ENCODE measurements at regions of chr15 and their contacts with region 1.

Region 1: GRCh38 chr15:74382004-74382816 is 14.8 kb upstream of the CYP11A1 start:
- DNase-seq: peak; percentile 66
- ATAC-seq: peak; percentile 93
- H3K4me3 ChIP-seq: no peak overlapping the region
- H3K27ac ChIP-seq: no peak overlapping the region
- H3K4me1 ChIP-seq: peaks cover 19 to 69% of the 10 kb centered on the region in 2 experiments
- H3K27me3 ChIP-seq: no peaks in the 10 kb centered on the region
- CTCF ChIP-seq: peak in 2 of 3 experiments; percentile 97 to 98; a peak in 4 of 6 replicates
- POLR2A ChIP-seq: no peak
- RAD21 ChIP-seq: no peak

Region 2: DNA sequence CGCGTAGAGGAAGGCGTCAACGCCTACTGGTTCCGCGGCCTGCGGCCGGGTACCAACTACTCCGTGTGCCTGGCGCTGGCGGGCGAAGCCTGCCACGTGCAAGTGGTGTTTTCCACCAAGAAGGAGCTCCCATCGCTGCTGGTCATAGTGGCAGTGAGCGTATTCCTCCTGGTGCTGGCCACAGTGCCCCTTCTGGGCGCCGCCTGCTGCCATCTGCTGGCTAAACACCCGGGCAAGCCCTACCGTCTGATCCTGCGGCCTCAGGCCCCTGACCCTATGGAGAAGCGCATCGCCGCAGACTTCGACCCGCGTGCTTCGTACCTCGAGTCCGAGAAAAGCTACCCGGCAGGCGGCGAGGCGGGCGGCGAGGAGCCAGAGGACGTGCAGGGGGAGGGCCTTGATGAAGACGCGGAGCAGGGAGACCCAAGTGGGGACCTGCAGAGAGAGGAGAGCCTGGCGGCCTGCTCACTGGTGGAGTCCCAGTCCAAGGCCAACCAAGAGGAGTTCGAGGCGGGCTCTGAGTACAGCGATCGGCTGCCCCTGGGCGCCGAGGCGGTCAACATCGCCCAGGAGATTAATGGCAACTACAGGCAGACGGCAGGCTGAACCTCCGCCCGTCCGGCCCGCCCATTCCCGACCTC is 247.7 kb before region 1 on chr15:
- CTCF ChIA-PET with region 1: no interaction called
- POLR2A ChIA-PET with region 1: no interaction called
- RAD21 ChIA-PET with region 1: no interaction called
- intact Hi-C with region 1: no loop called
- DNase-seq: no peak
- ATAC-seq: peak; percentile 69
- H3K4me3 ChIP-seq: no peak overlapping the region
- H3K27ac ChIP-seq: no peak overlapping the region
- H3K4me1 ChIP-seq: no peaks in the 10 kb centered on the region
- H3K27me3 ChIP-seq: no peaks in the 10 kb centered on the region
- CTCF ChIP-seq: peak in 2 of 3 experiments; percentile 25 to 53; a peak in 3 of 6 replicates
- POLR2A ChIP-seq: no peak
- RAD21 ChIP-seq: peak; percentile 26; the same call in 1 of the 2 replicates

Region 3: DNA sequence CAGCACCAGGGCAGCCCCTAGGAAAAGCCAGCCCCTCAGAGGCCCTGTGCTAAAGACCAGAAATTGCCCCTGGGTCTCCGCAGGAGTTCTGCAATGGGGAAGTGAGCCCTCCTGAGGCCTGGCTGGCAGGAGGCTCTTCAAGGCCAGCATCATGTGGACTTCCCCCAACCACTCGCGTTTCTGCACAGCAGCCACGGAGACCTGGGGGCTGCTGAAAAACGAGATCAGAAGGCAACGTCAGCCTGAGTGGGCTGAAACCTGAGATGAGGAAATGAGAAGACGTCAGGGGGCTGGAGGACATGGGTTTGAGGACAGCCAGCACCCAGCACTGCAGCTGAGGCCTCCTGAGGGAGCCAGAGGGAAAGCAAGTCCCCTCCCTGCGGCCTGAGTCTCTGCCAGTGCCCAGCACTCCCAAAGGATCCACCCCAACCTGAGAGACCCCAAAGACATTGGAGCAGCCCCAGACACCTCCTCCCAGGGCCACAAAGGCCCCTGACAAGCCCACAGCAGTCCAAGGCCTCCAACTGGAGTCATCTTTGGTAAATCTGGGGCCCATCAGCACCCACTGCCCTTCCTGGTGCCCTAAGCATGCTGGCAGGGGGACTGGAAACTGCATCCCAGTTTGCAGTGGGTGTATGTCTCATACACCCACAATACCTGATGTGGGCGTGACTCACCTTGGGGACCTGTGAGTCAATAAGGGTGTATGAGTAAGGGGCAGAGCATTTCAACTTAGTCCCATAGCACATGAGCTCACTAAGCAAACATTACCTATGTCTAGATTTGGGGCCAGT is 14.4 kb after region 1 on chr15:
- CTCF ChIA-PET with region 1: interaction called, 4 read pairs
- POLR2A ChIA-PET with region 1: interaction called, 24 read pairs
- RAD21 ChIA-PET with region 1: no interaction called
- intact Hi-C with region 1: no loop called
- DNase-seq: peak; percentile 89
- ATAC-seq: peak; percentile 76
- H3K4me3 ChIP-seq: peak overlapping the region; percentile 16 to 40; a peak in 3 of 4 replicates
- H3K27ac ChIP-seq: peak overlapping the region; percentile 75
- H3K4me1 ChIP-seq: peaks cover 68 to 98% of the 10 kb centered on the region in 2 experiments
- H3K27me3 ChIP-seq: no peaks in the 10 kb centered on the region
- CTCF ChIP-seq: 0 out of 6 replicates have a peak, but pooled peaks of 1 of the 3 experiments have one; percentile 6
- POLR2A ChIP-seq: no peak
- RAD21 ChIP-seq: no peak

Region 4: DNA sequence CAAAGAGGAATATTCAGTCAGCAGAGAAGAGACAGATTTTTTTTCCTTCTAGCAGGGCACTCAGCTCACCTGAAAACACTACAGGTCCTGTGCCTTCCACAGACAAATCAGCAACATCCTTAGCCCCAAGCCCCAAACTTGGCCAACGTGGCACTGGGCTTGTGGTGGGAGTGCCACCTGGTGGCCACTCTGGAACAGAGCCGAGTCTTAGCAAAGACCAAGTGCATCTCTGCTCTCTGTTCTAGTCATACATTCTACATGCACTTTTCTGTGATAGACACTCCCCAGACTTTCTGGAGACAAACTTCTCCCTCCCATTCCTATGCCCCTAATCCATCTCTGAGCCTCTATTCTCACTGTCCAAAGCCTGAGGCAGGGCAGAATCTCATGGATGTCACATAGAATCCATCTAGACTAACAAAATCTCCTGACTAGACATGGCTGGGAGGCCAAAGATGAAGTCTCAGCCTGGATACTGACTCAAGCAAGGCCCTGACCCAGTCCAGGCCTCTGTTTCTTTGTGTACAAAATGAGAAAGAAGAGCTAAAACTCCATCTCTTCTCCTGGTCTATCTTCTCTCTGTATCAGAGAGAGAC is 56.6 kb after region 1 on chr15:
- CTCF ChIA-PET with region 1: interaction called, 83 read pairs
- POLR2A ChIA-PET with region 1: interaction called, 9 read pairs
- RAD21 ChIA-PET with region 1: interaction called, 13 to 15 read pairs
- intact Hi-C with region 1: loop called (anchors 1 kb)
- DNase-seq: peak; percentile 74
- ATAC-seq: peak; percentile 81
- H3K4me3 ChIP-seq: no peak overlapping the region
- H3K27ac ChIP-seq: no peak overlapping the region
- H3K4me1 ChIP-seq: peaks cover 6 to 14% of the 10 kb centered on the region in 2 experiments
- H3K27me3 ChIP-seq: no peaks in the 10 kb centered on the region
- CTCF ChIP-seq: peak; percentile 94 to 96 (median 95)
- POLR2A ChIP-seq: no peak
- RAD21 ChIP-seq: peak; percentile 99

Region 5: GRCh38 chr15:74489518-74490338 is 107.5 kb after region 1 on chr15:
- CTCF ChIA-PET with region 1: interaction called, 9 read pairs
- POLR2A ChIA-PET with region 1: no interaction called
- RAD21 ChIA-PET with region 1: no interaction called
- intact Hi-C with region 1: loop called (anchors 2 kb)
- DNase-seq: peak; percentile 48
- ATAC-seq: peak; percentile 94
- H3K4me3 ChIP-seq: peak overlapping the region; percentile 19 to 38
- H3K27ac ChIP-seq: no peak overlapping the region
- H3K4me1 ChIP-seq: peaks cover 0 to 11% of the 10 kb centered on the region in 2 experiments; a peak in 2 of 4 replicates
- H3K27me3 ChIP-seq: no peaks in the 10 kb centered on the region
- CTCF ChIP-seq: peak; percentile 19 to 78 (median 77); a peak in 5 of 6 replicates
- POLR2A ChIP-seq: no peak
- RAD21 ChIP-seq: peak; percentile 66